CD4-positive, alpha-beta memory T cell (primary cell): ENCODE measurements at regions of chr17 and their contacts with region 1.

Region 1: DNA sequence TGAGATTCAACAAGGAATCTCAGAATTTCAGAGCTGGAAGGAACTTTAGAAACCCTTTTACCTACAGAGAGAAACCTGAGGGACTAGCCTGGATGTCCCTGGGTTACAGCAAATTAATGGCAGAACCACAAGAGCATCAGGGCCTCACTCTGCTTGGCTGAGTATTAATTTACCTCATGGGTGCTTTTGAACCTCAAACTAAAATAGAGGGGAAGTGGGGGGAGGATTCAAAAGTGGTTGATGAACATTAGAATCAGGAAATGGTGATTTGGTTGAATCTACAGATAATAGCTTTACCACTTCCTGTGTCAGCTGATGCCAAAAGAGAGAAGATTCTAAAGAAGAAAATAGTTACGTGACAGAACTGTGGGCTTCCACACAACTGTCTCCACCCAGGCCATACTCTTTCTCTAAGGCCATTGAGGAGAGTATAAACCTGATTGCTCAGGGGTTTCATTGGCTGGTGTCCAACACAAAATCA is 11.3 kb upstream of the SKAP1 start:
- DNase-seq: peak; percentile 83 to 91 (median 88)
- H3K4me3 ChIP-seq: peak overlapping the region; percentile 8 to 35
- H3K4me3 Mint-ChIP-seq: peak overlapping the region; percentile 56 to 87 (median 82)
- H3K27ac ChIP-seq: peak overlapping the region; percentile 70
- H3K27ac Mint-ChIP-seq: peak overlapping the region; percentile 97 to 100 (median 99)
- H3K4me1 ChIP-seq: peaks cover 98% of the 10 kb centered on the region
- H3K4me1 Mint-ChIP-seq: peaks cover 84 to 97% (median 94%) of the 10 kb centered on the region in 4 donors
- H3K27me3 ChIP-seq: no peaks in the 10 kb centered on the region
- H3K27me3 Mint-ChIP-seq: no peaks in the 10 kb centered on the region

Region 2: GRCh38 chr17:48107168-48108132 is 333.8 kb before region 1 on chr17 and contains the start of gene SNX11:
- CTCF ChIA-PET with region 1: no interaction called
- POLR2A ChIA-PET with region 1: no interaction called
- intact Hi-C with region 1: loop called (anchors 10 kb)
- DNase-seq: peak; percentile 93 to 98 (median 95)
- H3K4me3 ChIP-seq: peak within 1 kb of the TSS; percentile 83 to 98
- H3K4me3 Mint-ChIP-seq: peak within 1 kb of the TSS; percentile 92 to 99 (median 97)
- H3K27ac ChIP-seq: peak within 1 kb of the TSS; percentile 85
- H3K27ac Mint-ChIP-seq: peak within 1 kb of the TSS; percentile 82 to 96 (median 94)
- H3K4me1 ChIP-seq: peaks cover 47% of the 10 kb centered on the region
- H3K4me1 Mint-ChIP-seq: peaks cover 36 to 68% (median 51%) of the 10 kb centered on the region in 4 donors
- H3K27me3 ChIP-seq: no peaks in the 10 kb centered on the region
- H3K27me3 Mint-ChIP-seq: no peaks in the 10 kb centered on the region
- total RNA-seq, gene SNX11: 20.8 to 22.0 TPM

Region 3: GRCh38 chr17:48244121-48244711 is 197.1 kb before region 1 on chr17:
- CTCF ChIA-PET with region 1: no interaction called
- POLR2A ChIA-PET with region 1: no interaction called
- intact Hi-C with region 1: no loop called
- DNase-seq: peak in 1 of 5 donors; percentile 15
- H3K4me3 ChIP-seq: no peak overlapping the region
- H3K4me3 Mint-ChIP-seq: peak overlapping the region in 2 of 8 donors; percentile 12 to 45
- H3K27ac ChIP-seq: no peak overlapping the region
- H3K27ac Mint-ChIP-seq: peak overlapping the region in 3 of 7 donors; percentile 10 to 86 (median 78)
- H3K4me1 ChIP-seq: peaks cover 66% of the 10 kb centered on the region
- H3K4me1 Mint-ChIP-seq: peaks cover 53 to 76% (median 65%) of the 10 kb centered on the region in 4 donors
- H3K27me3 ChIP-seq: no peaks in the 10 kb centered on the region
- H3K27me3 Mint-ChIP-seq: no peaks in the 10 kb centered on the region

Region 4: GRCh38 chr17:48307814-48308411 is 133.4 kb before region 1 on chr17:
- CTCF ChIA-PET with region 1: no interaction called
- POLR2A ChIA-PET with region 1: no interaction called
- intact Hi-C with region 1: no loop called
- DNase-seq: peak; percentile 38 to 55 (median 42)
- H3K4me3 ChIP-seq: no peak overlapping the region
- H3K4me3 Mint-ChIP-seq: no peak overlapping the region
- H3K27ac ChIP-seq: no peak overlapping the region
- H3K27ac Mint-ChIP-seq: peak overlapping the region in 2 of 7 donors; percentile 15 to 29
- H3K4me1 ChIP-seq: no peaks in the 10 kb centered on the region
- H3K4me1 Mint-ChIP-seq: peaks cover 15 to 33% (median 21%) of the 10 kb centered on the region in 4 donors
- H3K27me3 ChIP-seq: no peaks in the 10 kb centered on the region
- H3K27me3 Mint-ChIP-seq: no peaks in the 10 kb centered on the region

Region 5: DNA sequence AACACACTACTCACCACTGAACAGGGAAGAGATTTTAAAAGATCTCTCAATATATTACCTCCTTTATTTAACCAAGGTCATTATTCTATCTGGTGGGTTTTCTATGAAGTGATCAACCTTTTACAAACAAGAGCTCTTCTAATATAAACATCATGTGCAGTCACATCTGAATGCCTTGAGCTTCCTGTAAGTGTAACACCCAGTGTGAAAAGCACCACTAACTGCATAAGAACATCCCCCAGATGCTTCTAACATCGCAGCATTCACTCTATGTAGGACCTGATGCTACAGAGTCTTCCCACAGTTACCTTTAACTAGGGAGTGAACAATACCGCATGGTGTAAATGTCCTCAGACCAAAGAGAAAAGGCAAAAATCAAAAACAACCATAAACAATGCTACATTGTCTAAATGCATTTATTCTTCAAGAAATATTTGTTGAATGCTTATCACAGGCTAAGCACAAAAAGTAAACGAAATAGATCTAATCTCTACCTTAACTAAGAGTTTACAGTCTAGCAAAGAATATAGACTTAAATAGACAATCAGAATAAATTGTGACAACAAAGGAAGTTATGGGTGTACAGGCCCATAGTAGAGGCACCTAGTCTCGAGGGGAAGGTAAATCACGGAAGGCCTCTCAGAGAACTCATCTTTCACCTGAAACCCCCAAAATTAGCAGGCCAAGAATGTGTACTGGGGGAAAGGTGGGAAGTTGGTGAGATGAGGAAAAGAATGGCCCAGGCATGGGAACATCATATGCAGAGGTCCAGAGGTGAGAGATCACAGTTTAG is 27.5 kb before region 1 on chr17:
- CTCF ChIA-PET with region 1: interaction called, 3 read pairs
- POLR2A ChIA-PET with region 1: interaction called, 40 read pairs
- intact Hi-C with region 1: loop called (anchors 2 kb)
- DNase-seq: peak in 2 of 5 donors; percentile 19 to 29
- H3K4me3 ChIP-seq: no peak overlapping the region
- H3K4me3 Mint-ChIP-seq: peak overlapping the region; percentile 63 to 85 (median 74)
- H3K27ac ChIP-seq: peak overlapping the region; percentile 48
- H3K27ac Mint-ChIP-seq: peak overlapping the region; percentile 80 to 96 (median 91)
- H3K4me1 ChIP-seq: peaks cover 95% of the 10 kb centered on the region
- H3K4me1 Mint-ChIP-seq: peaks cover 63 to 88% (median 78%) of the 10 kb centered on the region in 4 donors
- H3K27me3 ChIP-seq: no peaks in the 10 kb centered on the region
- H3K27me3 Mint-ChIP-seq: no peaks in the 10 kb centered on the region

Region 6: GRCh38 chr17:48429638-48430586 is 11.4 kb before region 1 on chr17 and contains the start of gene SKAP1:
- CTCF ChIA-PET with region 1: interaction called, 6 read pairs
- POLR2A ChIA-PET with region 1: interaction called, 93 read pairs
- intact Hi-C with region 1: loop called (anchors 1 kb)
- DNase-seq: peak; percentile 68 to 76 (median 71)
- H3K4me3 ChIP-seq: peak within 1 kb of the TSS; percentile 90 to 97
- H3K4me3 Mint-ChIP-seq: peak within 1 kb of the TSS; percentile 91 to 99 (median 97)
- H3K27ac ChIP-seq: peak within 1 kb of the TSS; percentile 89
- H3K27ac Mint-ChIP-seq: peak within 1 kb of the TSS; percentile 95 to 99 (median 97)
- H3K4me1 ChIP-seq: peaks cover 69% of the 10 kb centered on the region
- H3K4me1 Mint-ChIP-seq: peaks cover 62 to 97% (median 77%) of the 10 kb centered on the region in 4 donors
- H3K27me3 ChIP-seq: no peaks in the 10 kb centered on the region
- H3K27me3 Mint-ChIP-seq: no peaks in the 10 kb centered on the region
- total RNA-seq, gene SKAP1: 83.4 to 88.7 TPM